Right cardiac atrium (tissue), 5 donors: ENCODE measurements at regions of chr20 and their contacts with region 1.

Region 1: GRCh38 chr20:60794674-60795073 is 457.4 kb upstream of the CDH4 start:
- DNase-seq: no peak
- ATAC-seq: no peak
- H3K4me3 ChIP-seq: no peak overlapping the region
- H3K27ac ChIP-seq: no peak overlapping the region
- H3K4me1 ChIP-seq: no peaks in the 10 kb centered on the region
- H3K27me3 ChIP-seq: no peaks in the 10 kb centered on the region

Region 2: DNA sequence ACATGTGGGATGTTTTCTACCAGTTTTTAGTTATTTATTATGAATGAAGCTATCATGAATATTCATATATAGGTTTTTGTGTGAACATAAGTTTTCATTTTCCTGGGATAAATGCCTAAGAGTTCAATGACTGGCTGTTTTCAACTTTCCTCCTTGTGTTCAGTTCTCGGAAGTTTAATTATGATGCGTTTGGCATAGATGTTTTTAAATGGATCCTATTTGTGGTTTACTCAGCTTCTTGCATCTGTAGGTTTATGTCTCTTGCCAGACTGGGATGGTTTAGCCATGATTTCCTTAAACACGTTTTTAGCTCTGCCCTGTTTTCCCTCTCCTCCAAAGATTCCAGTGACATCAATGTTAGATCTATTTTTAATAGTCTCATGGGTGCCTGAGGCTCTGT is 46.3 kb after region 1 on chr20:
- intact Hi-C with region 1: loop called in 1 of 4 experiments (anchors 5 kb)
- DNase-seq: no peak
- ATAC-seq: no peak
- H3K4me3 ChIP-seq: no peak overlapping the region
- H3K27ac ChIP-seq: no peak overlapping the region
- H3K4me1 ChIP-seq: no peaks in the 10 kb centered on the region
- H3K27me3 ChIP-seq: no peaks in the 10 kb centered on the region